ENCODE measurements at regions of chr21 and their contacts with region 1.

Region 1: DNA sequence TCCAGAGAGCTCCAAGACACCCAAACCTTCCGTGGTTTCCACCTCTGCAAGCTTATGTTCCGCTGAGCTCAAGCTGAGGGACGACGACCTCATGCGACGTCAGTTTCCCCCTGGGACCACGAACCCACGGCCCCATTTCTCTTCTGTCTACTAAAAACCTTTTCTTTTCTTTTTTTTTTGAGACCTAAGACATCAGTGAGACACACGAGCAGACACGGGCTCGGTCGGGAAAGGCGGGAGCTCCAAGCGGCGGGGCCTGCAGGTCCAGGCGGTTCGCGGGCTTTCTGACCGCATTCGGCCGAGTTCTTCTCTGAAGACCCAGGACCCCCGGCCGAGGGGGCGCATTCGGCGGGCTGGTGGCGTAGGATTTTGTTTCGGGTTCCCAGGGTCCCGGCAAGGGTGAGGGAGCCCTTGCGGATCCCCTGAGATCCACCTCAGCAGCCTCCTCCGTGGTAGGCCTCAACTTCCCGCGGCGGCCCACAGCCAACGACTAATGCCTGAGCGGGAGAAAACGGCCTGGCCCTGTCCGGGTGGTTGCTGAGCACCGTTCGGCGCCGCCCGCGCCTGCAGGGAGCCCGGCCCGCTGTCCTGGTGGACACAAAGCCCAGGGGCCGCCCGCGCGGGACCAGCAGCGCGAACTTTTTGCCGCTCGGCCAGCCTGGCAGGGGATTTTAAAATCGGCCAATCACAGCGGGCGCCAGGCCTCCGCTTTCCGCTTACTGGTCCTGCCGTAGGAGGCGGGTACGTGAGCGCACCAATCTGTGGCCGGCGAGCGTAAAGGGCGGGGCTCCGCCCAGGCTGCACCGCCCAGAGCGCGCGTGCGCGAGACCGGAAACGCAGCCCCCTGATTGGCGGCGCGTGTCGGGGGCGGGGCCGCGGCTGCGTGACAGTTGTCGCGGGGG is at the start of gene C21orf58:
- DNase-seq: peak; percentile 98
- H3K4me3 ChIP-seq: peak within 1 kb of the TSS; percentile 89
- H3K27ac ChIP-seq: peak within 1 kb of the TSS; percentile 100
- H3K4me1 ChIP-seq: peaks cover 27% of the 10 kb centered on the region
- H3K27me3 ChIP-seq: no peaks in the 10 kb centered on the region
- CTCF ChIP-seq: no peak
- total RNA-seq, gene C21orf58: 41.2 and 51.0 TPM in 2 replicates

Region 2: GRCh38 chr21:46217541-46218196 is 105.8 kb before region 1 on chr21:
- CTCF ChIA-PET with region 1: no interaction called
- POLR2A ChIA-PET with region 1: interaction called, 11 read pairs
- intact Hi-C with region 1: no loop called
- DNase-seq: no peak
- H3K4me3 ChIP-seq: no peak overlapping the region
- H3K27ac ChIP-seq: no peak overlapping the region
- H3K4me1 ChIP-seq: no peaks in the 10 kb centered on the region
- H3K27me3 ChIP-seq: no peaks in the 10 kb centered on the region
- CTCF ChIP-seq: no peak

Region 3: DNA sequence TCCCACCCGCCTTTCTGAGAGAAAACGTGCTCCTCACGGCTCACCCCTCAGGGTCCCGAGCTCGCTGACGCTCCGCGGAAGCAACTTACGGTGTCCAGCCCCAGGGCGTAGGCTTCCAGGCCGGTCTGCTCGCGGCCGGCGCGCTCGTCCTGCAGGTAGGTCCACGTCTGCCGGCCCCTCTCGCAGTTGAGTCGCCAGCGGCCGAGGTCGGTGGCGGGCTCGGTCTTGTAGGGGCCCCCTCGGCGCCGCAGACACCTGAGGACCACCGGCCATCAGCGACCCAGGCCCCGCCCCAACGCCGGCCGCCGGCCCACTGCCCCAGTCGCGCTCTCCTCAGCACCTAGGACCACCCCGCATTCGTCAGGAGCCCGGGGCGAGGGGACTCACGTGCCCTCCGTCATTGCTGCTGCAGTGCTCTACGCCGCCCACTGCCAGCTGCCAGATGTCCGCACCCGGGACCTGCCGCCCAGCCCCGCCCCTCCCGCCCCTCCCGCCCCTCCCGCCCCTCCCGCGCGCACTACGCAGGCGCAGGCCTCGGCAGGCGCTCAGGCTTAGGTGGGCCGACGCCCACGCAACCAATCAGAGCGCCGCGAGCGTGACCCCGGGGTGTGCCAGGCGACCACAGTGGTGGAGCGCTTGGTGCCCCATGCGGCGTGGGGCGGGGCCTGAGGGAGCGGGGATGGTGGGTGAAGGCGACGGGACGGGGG is 95.0 kb before region 1 on chr21 and contains the start of gene LSS:
- CTCF ChIA-PET with region 1: no interaction called
- POLR2A ChIA-PET with region 1: no interaction called
- intact Hi-C with region 1: loop called (anchors 5 kb)
- DNase-seq: peak; percentile 99
- H3K4me3 ChIP-seq: peak within 1 kb of the TSS; percentile 92
- H3K27ac ChIP-seq: peak within 1 kb of the TSS; percentile 87
- H3K4me1 ChIP-seq: peaks cover 18% of the 10 kb centered on the region
- H3K27me3 ChIP-seq: no peaks in the 10 kb centered on the region
- CTCF ChIP-seq: no peak
- total RNA-seq, gene LSS: 130 and 151 TPM in 2 replicates

Region 4: DNA sequence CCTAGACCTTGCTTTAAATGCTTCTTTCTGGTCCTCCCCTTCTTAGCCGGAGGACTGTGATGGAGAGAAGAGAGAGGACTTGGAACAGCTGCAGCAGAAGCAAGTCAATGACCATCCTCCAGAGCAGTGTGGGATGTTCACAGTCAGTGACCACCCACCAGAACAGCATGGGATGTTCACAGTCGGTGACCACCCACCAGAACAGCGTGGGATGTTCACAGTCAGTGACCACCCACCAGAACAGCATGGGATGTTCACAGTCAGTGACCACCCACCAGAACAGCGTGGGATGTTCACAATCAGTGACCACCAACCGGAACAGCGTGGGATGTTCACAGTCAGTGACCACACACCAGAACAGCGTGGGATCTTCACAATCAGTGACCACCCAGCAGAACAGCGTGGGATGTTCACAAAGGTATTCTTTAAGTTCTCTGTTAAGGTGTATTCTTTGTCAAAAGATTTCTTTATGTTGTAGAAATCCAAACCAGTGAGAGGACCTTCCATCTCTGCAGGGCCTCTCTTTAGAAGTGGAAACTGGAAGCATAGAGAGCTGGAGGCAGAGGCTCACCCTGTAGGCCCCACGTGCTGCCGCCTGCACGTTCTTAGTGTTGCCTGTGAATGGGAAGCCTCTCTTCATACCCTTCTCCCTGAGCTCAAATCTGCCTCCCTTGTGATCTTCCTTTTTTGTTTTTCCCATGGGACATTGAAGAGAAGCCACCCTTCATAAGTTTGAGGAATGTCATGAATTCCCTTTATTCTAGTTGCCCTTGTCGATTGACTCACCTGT is 11.1 kb after region 1 on chr21:
- CTCF ChIA-PET with region 1: no interaction called
- POLR2A ChIA-PET with region 1: no interaction called
- intact Hi-C with region 1: no loop called
- DNase-seq: no peak
- H3K4me3 ChIP-seq: no peak overlapping the region
- H3K27ac ChIP-seq: no peak overlapping the region
- H3K4me1 ChIP-seq: no peaks in the 10 kb centered on the region
- H3K27me3 ChIP-seq: no peaks in the 10 kb centered on the region
- CTCF ChIP-seq: no peak

Measured in A673 (cell line).